ENCODE measurements at regions of chr13 and their contacts with region 1.

Region 1: GRCh38 chr13:98022210-98022609 is 68.7 kb downstream of the IPO5 start:
- DNase-seq: peak; percentile 80
- H3K4me3 ChIP-seq: no peak overlapping the region
- H3K27ac ChIP-seq: peak overlapping the region; percentile 60
- H3K4me1 ChIP-seq: peaks cover 41% of the 10 kb centered on the region
- H3K27me3 ChIP-seq: no peaks in the 10 kb centered on the region
- CTCF ChIP-seq: no peak

Region 2: DNA sequence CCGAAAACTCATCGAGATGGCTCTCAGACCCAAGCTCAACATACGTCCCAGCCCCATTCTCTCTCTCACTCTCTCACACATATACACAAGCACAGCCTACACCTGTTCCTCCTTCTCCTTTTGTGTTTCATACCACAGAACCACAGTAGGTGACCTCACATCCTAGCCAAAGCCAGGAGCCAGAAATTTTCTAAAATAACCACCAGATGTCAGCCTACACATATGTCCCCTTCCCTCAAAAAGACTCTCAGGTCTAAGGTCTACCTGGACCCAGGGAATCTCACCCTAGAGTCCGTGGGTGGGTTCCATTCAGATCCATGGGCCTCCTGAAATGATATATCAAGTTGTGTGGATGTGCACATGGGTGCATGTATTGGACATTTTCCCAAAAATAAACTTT is 172.9 kb before region 1 on chr13:
- CTCF ChIA-PET with region 1: no interaction called
- POLR2A ChIA-PET with region 1: no interaction called
- intact Hi-C with region 1: loop called (anchors 5 kb)
- DNase-seq: peak; percentile 59
- H3K4me3 ChIP-seq: no peak overlapping the region
- H3K27ac ChIP-seq: no peak overlapping the region
- H3K4me1 ChIP-seq: peaks cover 25% of the 10 kb centered on the region
- H3K27me3 ChIP-seq: no peaks in the 10 kb centered on the region
- CTCF ChIP-seq: peak; percentile 68

Region 3: DNA sequence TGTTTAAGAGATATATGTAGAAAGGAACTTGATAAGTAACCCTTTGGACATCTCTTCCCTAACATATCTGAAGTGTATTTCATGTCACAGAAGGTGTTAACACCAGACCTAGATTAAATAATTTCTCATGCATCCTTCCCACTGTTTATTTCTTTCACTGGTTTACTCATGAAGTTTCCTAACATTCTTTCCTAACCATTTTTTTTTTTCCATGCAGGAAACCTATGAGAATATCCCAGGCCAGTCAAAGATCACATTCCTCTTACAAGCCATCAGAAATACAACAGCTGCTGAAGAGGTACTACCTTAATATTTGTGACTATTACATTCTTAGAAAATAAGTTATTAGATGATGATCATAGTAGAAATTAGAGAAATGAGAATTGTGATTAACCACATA is 39.9 kb before region 1 on chr13:
- CTCF ChIA-PET with region 1: no interaction called
- POLR2A ChIA-PET with region 1: no interaction called
- intact Hi-C with region 1: loop called (anchors 5 kb)
- DNase-seq: no peak
- H3K4me3 ChIP-seq: no peak overlapping the region
- H3K27ac ChIP-seq: peak overlapping the region; percentile 94
- H3K4me1 ChIP-seq: peaks cover 36% of the 10 kb centered on the region
- H3K27me3 ChIP-seq: no peaks in the 10 kb centered on the region
- CTCF ChIP-seq: no peak

Region 4: GRCh38 chr13:98206946-98207345 is 184.7 kb after region 1 on chr13:
- CTCF ChIA-PET with region 1: no interaction called
- POLR2A ChIA-PET with region 1: no interaction called
- intact Hi-C with region 1: no loop called
- DNase-seq: no peak
- H3K4me3 ChIP-seq: no peak overlapping the region
- H3K27ac ChIP-seq: no peak overlapping the region
- H3K4me1 ChIP-seq: no peaks in the 10 kb centered on the region
- H3K27me3 ChIP-seq: no peaks in the 10 kb centered on the region
- CTCF ChIP-seq: no peak